PC-9 (cell line): ENCODE measurements at regions of chr11 and their contacts with region 1.

Region 1: DNA sequence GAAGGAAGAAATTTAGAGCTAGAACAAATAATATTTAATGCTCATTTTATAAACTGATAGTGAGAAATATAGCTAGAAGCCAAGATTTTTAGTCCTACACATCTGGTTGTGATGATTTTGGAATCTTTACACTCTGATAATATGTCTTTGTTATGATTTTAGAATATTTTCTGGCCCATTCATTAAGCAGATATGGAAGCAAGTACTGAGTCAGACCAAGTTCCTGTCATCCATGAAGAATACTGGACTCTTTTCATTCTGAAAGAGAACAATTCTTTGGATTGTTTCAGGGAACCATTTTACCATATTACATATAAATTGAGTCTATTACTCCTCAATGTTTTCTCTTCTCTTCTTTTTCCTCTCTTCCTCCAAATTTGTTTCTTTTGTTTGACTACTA is 227.4 kb downstream of the TMEM135 start:
- DNase-seq: no peak
- H3K4me3 ChIP-seq: no peak overlapping the region
- H3K27ac ChIP-seq: no peak overlapping the region
- H3K4me1 ChIP-seq: no peaks in the 10 kb centered on the region
- H3K27me3 ChIP-seq: no peaks in the 10 kb centered on the region
- CTCF ChIP-seq: no peak

Region 2: DNA sequence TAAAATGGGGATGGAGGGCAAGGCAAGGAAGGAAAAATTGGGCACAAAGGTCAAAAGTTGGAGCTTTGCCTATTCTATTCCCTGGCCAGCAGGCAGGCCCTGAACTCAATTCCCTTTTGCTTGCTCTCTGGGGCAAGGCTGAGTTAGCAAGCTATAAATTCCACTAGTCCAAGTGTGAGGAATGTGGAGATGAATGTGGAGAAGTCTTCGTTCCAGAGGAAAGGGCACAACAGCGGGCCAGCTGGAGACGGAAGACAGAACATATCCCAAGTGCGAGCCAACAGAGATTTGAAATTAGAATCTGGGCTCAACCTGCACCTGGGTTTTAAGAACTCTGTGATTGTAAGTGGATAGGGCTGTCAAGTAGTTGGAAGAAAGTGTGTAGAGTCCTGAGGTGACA is 280.4 kb before region 1 on chr11:
- CTCF ChIA-PET with region 1: no interaction called
- POLR2A ChIA-PET with region 1: interaction called, 29 read pairs
- intact Hi-C with region 1: no loop called
- DNase-seq: no peak
- H3K4me3 ChIP-seq: no peak overlapping the region
- H3K27ac ChIP-seq: no peak overlapping the region
- H3K4me1 ChIP-seq: peaks cover 28% of the 10 kb centered on the region
- H3K27me3 ChIP-seq: no peaks in the 10 kb centered on the region
- CTCF ChIP-seq: no peak